ENCODE measurements at regions of chr7 and their contacts with region 1.

Region 1: GRCh38 chr7:104923010-104923421 is 91.0 kb upstream of the KMT2E start:
- DNase-seq: peak; percentile 89
- ATAC-seq: peak; percentile 99
- H3K4me3 Mint-ChIP-seq: no peak overlapping the region
- H3K27ac Mint-ChIP-seq: peak overlapping the region; percentile 59
- H3K4me1 Mint-ChIP-seq: peaks cover 4% of the 10 kb centered on the region
- H3K27me3 Mint-ChIP-seq: no peaks in the 10 kb centered on the region

Region 2: GRCh38 chr7:103573479-103574058 is 1349.4 kb before region 1 on chr7:
- CTCF ChIA-PET with region 1: interaction called, 3 read pairs
- POLR2A ChIA-PET with region 1: no interaction called
- intact Hi-C with region 1: loop called in 1 of 2 experiments (anchors 1 kb)
- DNase-seq: no peak
- ATAC-seq: no peak
- H3K4me3 Mint-ChIP-seq: no peak overlapping the region
- H3K27ac Mint-ChIP-seq: no peak overlapping the region
- H3K4me1 Mint-ChIP-seq: no peaks in the 10 kb centered on the region
- H3K27me3 Mint-ChIP-seq: peaks cover 8% of the 10 kb centered on the region

Region 3: DNA sequence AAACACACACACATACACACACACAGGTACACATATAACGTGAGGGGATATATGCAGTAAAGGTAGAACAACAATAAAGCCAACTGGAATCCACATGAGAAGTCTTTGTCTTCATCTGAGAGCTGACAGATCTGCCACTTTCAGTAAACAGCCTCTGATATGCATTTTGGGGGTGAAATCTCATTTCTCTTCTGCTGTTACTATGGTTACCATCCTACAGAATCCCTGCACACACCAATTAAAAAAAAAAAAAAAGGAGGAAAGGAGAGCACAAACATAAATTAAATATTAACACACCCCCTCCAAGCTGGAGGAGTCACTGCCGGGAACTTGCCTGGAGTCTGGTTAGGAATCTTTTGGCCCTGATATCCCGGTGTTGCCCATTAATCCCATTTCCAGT is 425.6 kb before region 1 on chr7:
- CTCF ChIA-PET with region 1: no interaction called
- POLR2A ChIA-PET with region 1: no interaction called
- intact Hi-C with region 1: no loop called
- DNase-seq: no peak
- ATAC-seq: no peak
- H3K4me3 Mint-ChIP-seq: no peak overlapping the region
- H3K27ac Mint-ChIP-seq: no peak overlapping the region
- H3K4me1 Mint-ChIP-seq: no peaks in the 10 kb centered on the region
- H3K27me3 Mint-ChIP-seq: peaks cover 4% of the 10 kb centered on the region

Region 4: DNA sequence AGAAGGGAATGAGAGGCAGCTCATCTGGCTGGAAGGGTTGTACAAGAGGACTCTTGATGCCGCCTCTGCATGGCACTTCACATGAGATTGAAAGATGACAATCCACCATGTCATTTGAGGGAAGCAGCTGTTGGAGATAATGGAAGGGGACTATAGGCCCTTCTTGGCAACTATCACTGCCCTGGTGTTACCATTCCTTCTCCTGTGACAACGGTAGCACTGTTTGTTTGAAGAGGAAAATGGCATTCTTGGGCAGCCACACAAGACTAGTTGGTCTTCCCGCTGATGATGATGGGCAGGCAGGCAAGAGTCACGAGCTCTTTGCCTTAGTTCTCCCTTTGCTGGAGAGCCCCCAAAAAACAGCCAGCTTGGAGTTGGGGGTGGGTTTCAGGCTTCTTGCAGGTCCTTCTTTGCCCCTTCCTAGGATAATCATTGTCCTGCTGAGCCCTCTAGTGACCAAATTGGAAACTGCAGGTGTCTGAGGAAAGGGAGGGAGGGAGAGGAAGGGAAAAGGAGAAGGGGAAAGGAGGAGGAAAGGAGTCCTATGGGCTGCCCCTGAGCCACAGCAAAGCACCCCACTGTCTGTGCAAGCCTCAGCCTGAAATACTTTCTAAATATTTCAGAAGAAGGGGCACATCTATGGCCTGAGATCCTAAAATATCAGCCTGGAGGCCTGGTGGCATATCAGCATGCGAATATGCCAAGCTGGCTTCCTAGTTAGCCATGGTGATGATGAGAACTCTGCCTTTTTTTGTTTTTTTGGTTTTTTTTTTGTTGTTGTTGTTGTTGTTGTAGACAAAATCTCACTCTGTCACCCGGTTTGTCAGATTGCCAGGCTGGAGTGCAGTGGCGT is 74.7 kb before region 1 on chr7:
- CTCF ChIA-PET with region 1: interaction called, 5 read pairs
- POLR2A ChIA-PET with region 1: no interaction called
- intact Hi-C with region 1: loop called in 1 of 2 experiments (anchors 2 kb)
- DNase-seq: peak; percentile 70
- ATAC-seq: peak; percentile 66
- H3K4me3 Mint-ChIP-seq: no peak overlapping the region
- H3K27ac Mint-ChIP-seq: no peak overlapping the region
- H3K4me1 Mint-ChIP-seq: no peaks in the 10 kb centered on the region
- H3K27me3 Mint-ChIP-seq: peaks cover 10% of the 10 kb centered on the region

Region 5: DNA sequence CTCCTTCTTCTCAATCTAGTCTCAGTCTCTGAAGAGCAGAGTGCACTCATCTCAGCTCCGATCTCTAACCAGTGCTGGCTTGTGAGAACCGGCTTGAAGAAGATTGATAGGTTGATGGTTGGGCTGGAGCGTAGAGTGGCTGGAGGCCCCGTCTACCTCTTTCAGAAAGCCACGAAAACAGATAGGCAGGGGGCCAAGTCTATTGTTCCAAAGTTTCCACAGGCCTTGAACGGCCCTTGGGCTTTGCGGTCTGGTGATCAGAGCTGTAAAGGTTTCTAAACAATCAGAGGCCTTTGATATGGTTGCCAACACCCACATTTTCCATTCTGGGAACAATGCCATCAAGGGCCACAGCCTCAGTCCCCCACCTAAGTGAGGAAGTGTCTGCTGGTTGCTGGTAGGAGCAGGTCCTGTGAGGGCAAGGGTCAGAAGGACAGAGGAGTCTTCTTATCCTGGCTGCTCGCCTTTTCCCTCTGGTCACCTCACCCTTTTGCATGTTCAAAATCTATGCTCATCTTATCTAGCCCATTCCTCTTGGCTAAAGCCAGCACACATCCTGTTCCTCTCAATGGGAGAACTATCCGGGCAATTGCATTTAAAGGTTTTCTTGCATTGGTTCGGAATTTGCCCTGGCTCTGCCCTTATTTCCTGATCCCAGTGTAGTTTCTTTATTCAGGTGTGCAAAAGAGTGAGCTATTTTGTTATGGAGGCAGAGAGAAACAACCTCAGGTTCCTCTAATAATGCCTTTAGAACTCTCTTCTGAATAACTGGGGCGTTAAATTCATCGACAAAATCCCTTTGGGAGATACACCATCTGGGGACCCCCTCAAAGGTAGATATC is 20.7 kb after region 1 on chr7:
- CTCF ChIA-PET with region 1: interaction called, 9 read pairs
- POLR2A ChIA-PET with region 1: no interaction called
- intact Hi-C with region 1: loop called in 1 of 2 experiments (anchors 1 kb)
- DNase-seq: peak; percentile 87
- ATAC-seq: peak; percentile 68
- H3K4me3 Mint-ChIP-seq: peak overlapping the region; percentile 95
- H3K27ac Mint-ChIP-seq: peak overlapping the region; percentile 99
- H3K4me1 Mint-ChIP-seq: peaks cover 68% of the 10 kb centered on the region
- H3K27me3 Mint-ChIP-seq: no peaks in the 10 kb centered on the region

Region 6: GRCh38 chr7:105131033-105131656 is 208.1 kb after region 1 on chr7:
- CTCF ChIA-PET with region 1: no interaction called
- POLR2A ChIA-PET with region 1: no interaction called
- intact Hi-C with region 1: loop called in 1 of 2 experiments (anchors 5 kb)
- DNase-seq: no peak
- ATAC-seq: peak; percentile 66
- H3K4me3 Mint-ChIP-seq: no peak overlapping the region
- H3K27ac Mint-ChIP-seq: peak overlapping the region; percentile 47
- H3K4me1 Mint-ChIP-seq: peaks cover 37% of the 10 kb centered on the region
- H3K27me3 Mint-ChIP-seq: no peaks in the 10 kb centered on the region

Region 7: DNA sequence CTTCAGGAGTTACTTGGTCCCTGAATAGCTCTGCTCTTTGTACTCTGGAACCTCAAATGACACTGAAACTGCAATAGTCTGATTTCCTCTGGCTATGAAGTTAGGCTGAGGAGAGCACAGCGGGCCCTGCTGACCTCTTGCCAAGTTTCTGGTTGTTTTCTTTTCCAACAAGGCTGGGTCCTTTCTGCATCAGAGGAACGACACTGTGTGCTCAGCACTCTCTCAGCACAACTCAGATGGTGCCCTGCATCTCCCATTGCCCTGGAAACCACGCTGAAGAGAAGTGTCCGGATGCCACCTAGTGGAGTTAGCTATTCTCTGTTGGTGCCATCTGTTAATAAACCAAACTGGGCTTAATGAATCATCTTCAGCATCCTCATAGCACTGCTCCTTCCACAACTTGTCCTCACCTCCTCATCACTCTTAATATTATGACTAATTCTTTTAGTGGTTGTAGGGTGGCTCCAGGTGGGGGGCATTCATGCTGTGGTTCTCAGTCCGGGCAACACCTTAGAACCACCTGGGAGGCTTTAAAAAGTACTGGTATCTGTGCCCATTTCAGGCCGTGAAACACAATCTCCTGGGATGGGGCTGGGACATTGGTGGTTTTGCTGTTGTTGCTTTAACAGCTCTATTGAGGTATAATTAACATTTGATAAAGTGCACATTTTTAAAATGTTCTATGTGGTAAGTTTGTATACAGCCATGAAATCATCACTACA is 666.5 kb after region 1 on chr7:
- CTCF ChIA-PET with region 1: interaction called, 3 read pairs
- POLR2A ChIA-PET with region 1: no interaction called
- intact Hi-C with region 1: loop called (anchors 1 to 5 kb)
- DNase-seq: peak; percentile 77
- ATAC-seq: peak; percentile 98
- H3K4me3 Mint-ChIP-seq: no peak overlapping the region
- H3K27ac Mint-ChIP-seq: no peak overlapping the region
- H3K4me1 Mint-ChIP-seq: peaks cover 8% of the 10 kb centered on the region
- H3K27me3 Mint-ChIP-seq: no peaks in the 10 kb centered on the region